GM10248 (cell line): ENCODE measurements at regions of chr9 and their contacts with region 1.

Region 1: DNA sequence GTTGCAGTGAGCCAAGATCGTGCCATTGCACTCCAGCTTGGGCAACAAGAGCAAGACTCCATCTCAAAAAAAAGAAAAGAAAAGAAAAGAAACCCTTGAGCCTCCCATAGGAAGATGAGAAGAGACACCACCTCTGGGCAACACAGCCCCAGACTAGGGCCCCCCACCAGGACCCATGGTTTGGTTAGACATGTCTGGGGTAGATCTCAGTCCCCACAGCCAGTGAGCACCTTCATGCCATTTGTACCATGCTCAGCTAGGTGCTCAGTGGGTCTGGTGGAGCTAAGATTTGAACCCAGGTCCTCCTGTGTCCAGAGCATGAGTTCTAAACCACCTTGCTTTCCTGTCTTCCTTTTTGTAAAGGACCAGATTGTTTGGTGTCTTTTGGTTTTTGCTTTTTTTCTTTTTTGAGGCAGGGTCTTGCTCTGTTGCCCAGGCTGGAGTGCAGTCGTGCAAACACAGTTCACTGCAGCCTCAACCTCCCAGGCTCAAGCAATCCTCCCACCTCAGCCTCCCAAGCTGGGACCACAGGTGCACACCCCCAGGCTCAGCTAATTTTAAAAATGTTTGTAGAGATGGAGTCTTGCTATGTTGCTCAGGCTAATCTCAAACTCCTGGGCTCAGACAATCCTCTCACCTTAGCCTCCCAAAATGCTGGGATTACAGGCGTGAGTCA is 11.7 kb downstream of the OLFML2A start:
- DNase-seq: no peak
- CTCF ChIP-seq: no peak

Region 2: DNA sequence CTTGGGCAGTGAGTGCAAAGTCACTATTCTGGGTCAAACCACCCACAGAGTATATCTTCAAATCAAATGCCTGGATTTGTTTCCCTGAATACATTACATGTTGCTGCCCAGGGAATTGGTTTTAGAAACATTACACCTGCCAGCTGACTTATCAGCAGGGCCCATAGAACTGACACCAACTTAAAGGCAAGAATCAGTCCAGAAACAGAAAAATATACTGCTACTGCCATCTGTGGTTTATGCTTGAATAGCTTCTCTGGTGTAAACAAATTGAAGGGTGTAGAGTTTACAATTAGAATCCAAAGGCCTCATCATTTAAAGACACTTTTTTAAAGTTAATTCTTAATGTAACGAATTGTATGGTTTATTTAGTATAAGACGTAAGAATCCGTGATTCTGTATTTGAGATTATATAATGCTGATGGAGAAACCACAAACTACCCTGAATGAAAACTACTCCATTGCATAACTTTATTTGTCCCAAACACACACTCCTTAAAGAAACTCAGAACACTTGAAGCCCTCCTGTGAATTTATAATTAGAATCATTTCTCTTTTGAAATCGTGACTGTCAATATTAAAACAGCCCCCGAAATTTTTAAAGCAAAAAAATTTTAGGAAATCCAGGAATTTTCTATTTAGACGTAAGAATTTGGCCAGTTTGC is 23.8 kb before region 1 on chr9:
- CTCF ChIA-PET with region 1: no interaction called
- POLR2A ChIA-PET with region 1: no interaction called
- DNase-seq: peak; percentile 52
- CTCF ChIP-seq: peak; percentile 24

Region 3: GRCh38 chr9:124800306-124801259 is 11.9 kb after region 1 on chr9:
- CTCF ChIA-PET with region 1: interaction called, 13 read pairs
- POLR2A ChIA-PET with region 1: no interaction called
- DNase-seq: peak; percentile 61
- CTCF ChIP-seq: no peak